ENCODE measurements at regions of chr11 and their contacts with region 1.

Region 1: DNA sequence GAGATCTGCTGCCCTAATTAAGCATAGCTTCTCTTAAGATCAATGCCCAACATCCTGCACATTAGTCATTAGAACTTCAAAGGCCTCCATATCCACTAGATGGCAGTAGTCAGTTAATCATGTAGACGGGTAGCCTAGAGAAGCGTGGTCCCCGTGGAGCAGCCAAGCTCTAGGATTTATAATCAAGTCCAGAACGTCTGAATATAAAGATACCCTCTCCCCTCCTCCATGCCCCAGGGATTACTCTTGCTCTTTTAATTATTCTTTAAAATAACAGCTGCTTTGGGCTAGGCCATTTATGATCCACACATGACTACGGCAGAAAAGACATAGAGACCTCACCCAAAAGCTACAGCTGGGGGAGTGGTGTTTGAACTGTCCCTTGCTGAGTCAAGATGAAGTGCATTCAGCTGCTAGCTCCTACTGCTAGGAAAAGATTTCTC is 327.6 kb upstream of the PLET1 start:
- DNase-seq: peak in 1 of 2 experiments; percentile 19
- H3K4me3 ChIP-seq: no peak overlapping the region
- H3K27ac ChIP-seq: no peak overlapping the region
- H3K4me1 ChIP-seq: peaks cover 0 to 4% (median 1%) of the 10 kb centered on the region in 4 experiments; a peak in 1 of 7 replicates
- H3K27me3 ChIP-seq: no peaks in the 10 kb centered on the region
- CTCF ChIP-seq: peak in 2 of 3 experiments; percentile 73 to 74; a peak in 3 of 4 replicates
- EP300 ChIP-seq: no peak
- POLR2A ChIP-seq: no peak
- RAD21 ChIP-seq: peak; percentile 88 to 93

Region 2: GRCh38 chr11:112440518-112440917 is 147.8 kb before region 1 on chr11:
- CTCF ChIA-PET with region 1: interaction called, 45 read pairs
- POLR2A ChIA-PET with region 1: no interaction called
- DNase-seq: peak in 1 of 2 experiments; percentile 29
- H3K4me3 ChIP-seq: no peak overlapping the region
- H3K27ac ChIP-seq: no peak overlapping the region
- H3K4me1 ChIP-seq: no peaks in the 10 kb centered on the region
- H3K27me3 ChIP-seq: peaks cover 0 to 1% (median 0%) of the 10 kb centered on the region in 4 experiments; a peak in 2 of 7 replicates
- CTCF ChIP-seq: peak; percentile 40 to 93 (median 86)
- EP300 ChIP-seq: no peak
- POLR2A ChIP-seq: no peak
- RAD21 ChIP-seq: peak; percentile 96 to 99

Region 3: DNA sequence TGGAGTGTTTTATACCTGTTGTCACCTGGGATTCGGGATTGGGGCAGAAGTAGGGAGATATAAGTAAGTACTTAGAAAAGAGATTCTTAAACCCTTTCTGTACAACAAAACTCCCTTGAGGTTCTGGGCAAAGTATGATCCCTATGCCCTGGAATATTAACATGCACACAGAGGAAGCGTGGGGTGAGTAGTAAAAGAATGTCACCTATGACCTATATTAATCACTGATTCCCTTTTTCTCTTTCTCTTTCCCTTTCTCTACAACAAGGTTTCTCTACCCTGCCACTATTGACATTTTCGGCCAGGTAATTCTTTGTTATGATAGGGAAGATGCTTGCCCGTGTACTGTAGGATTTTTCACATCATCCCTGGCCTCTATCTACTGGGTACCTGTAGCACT is 117.9 kb before region 1 on chr11:
- CTCF ChIA-PET with region 1: interaction called, 10 read pairs
- POLR2A ChIA-PET with region 1: no interaction called
- DNase-seq: no peak
- H3K4me3 ChIP-seq: no peak overlapping the region
- H3K27ac ChIP-seq: no peak overlapping the region
- H3K4me1 ChIP-seq: no peaks in the 10 kb centered on the region
- H3K27me3 ChIP-seq: no peaks in the 10 kb centered on the region
- CTCF ChIP-seq: no peak
- EP300 ChIP-seq: no peak
- POLR2A ChIP-seq: no peak
- RAD21 ChIP-seq: no peak

Region 4: GRCh38 chr11:112650527-112650926 is 62.3 kb after region 1 on chr11:
- CTCF ChIA-PET with region 1: interaction called, 12 read pairs
- POLR2A ChIA-PET with region 1: no interaction called
- DNase-seq: no peak
- H3K4me3 ChIP-seq: no peak overlapping the region
- H3K27ac ChIP-seq: no peak overlapping the region
- H3K4me1 ChIP-seq: peaks cover 0 to 4% (median 0%) of the 10 kb centered on the region in 4 experiments; a peak in 2 of 7 replicates
- H3K27me3 ChIP-seq: no peaks in the 10 kb centered on the region
- CTCF ChIP-seq: no peak
- EP300 ChIP-seq: no peak
- POLR2A ChIP-seq: no peak
- RAD21 ChIP-seq: no peak

Region 5: GRCh38 chr11:112795142-112795815 is 207.0 kb after region 1 on chr11:
- CTCF ChIA-PET with region 1: interaction called, 21 read pairs
- POLR2A ChIA-PET with region 1: no interaction called
- DNase-seq: peak; percentile 29 to 72
- H3K4me3 ChIP-seq: no peak overlapping the region
- H3K27ac ChIP-seq: no peak overlapping the region
- H3K4me1 ChIP-seq: peaks cover 4 to 14% (median 10%) of the 10 kb centered on the region in 4 experiments
- H3K27me3 ChIP-seq: no peaks in the 10 kb centered on the region
- CTCF ChIP-seq: peak; percentile 54 to 74 (median 67)
- EP300 ChIP-seq: no peak
- POLR2A ChIP-seq: no peak
- RAD21 ChIP-seq: peak; percentile 61 to 65

Measured in H1 (cell line).